B cell (primary cell): ENCODE measurements at regions of chr12 and their contacts with region 1.

Region 1: DNA sequence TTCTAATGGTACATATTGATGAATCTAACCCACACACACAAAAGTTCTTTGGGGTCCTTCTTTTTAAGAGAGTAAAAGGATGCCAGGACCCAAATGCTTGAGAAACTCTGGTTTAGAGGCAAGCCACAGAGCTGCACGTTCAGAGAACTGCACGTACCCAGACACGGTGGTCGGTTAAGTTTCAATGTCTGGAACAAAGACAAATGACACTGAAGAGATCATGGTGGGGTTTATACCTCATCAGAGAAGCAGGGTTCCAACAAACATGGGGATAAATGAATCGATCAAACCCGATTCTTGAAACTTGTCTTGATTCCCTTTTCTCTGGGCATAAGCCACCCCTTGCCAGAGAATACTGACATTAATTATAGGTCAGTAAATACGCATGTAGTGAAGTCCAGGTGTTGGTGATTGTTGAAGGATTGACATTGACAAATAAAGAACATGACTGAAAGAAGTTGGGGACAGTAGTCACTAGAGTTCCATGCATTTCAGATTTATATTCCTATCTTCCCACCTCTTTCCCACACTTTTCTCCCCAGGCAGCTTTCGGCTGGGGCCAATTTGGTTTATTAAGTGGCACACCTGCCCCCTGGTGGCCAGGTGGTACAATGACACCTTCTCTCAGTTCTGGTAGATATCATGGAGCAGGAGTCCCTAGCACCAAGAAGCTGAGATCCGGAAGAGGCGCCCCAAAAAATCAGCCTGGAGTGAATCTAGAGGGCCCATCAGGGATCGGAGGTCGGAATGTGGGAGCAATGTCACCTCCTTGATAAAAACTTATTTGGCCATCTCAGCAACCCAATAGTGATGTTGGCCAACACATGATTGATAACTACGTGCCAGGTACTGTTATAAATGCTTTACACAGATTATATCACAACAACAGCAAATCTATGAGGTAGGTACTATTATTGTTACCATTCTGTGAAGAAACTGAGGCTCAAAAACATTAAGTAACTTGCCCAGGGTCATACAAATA is 17.8 kb upstream of the HDAC7 start:
- DNase-seq: peak; percentile 84
- ATAC-seq: peak; percentile 50
- H3K4me3 ChIP-seq: no peak overlapping the region
- H3K4me3 Mint-ChIP-seq: peak overlapping the region; percentile 49
- H3K27ac ChIP-seq: no peak overlapping the region
- H3K27ac Mint-ChIP-seq: peak overlapping the region; percentile 77
- H3K4me1 ChIP-seq: peaks cover 46 to 53% of the 10 kb centered on the region in 2 donors
- H3K4me1 Mint-ChIP-seq: peaks cover 53% of the 10 kb centered on the region
- H3K27me3 ChIP-seq: no peaks in the 10 kb centered on the region
- H3K27me3 Mint-ChIP-seq: no peaks in the 10 kb centered on the region
- CTCF ChIP-seq: peak; percentile 95

Region 2: DNA sequence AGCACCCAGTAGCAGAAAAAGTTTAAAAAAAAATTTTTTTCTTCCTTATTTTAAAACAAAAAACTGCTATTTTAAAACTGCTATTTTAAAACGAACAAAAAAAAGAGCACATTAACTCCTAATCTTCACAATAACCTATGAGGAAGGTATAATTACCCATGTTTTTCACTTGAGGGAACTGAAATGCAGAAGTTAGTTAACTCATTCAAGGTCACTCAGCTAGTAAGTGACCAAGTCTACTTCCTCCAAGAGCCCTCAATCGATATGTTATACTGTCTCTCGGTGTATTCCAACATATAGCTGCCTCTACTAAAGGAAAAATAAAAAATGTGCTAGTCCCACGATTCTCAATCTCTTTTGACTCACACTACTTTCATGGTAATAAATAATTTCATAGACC is 139.4 kb before region 1 on chr12:
- CTCF ChIA-PET with region 1: interaction called, 15 read pairs
- POLR2A ChIA-PET with region 1: no interaction called
- intact Hi-C with region 1: no loop called
- DNase-seq: peak; percentile 54
- ATAC-seq: peak; percentile 68
- H3K4me3 ChIP-seq: peak overlapping the region in 1 of 5 experiments; percentile 11
- H3K4me3 Mint-ChIP-seq: peak overlapping the region; percentile 21
- H3K27ac ChIP-seq: peak overlapping the region in 1 of 2 donors; percentile 39
- H3K27ac Mint-ChIP-seq: peak overlapping the region; percentile 22
- H3K4me1 ChIP-seq: peaks cover 17 to 20% of the 10 kb centered on the region in 2 donors
- H3K4me1 Mint-ChIP-seq: peaks cover 46% of the 10 kb centered on the region
- H3K27me3 ChIP-seq: no peaks in the 10 kb centered on the region
- H3K27me3 Mint-ChIP-seq: no peaks in the 10 kb centered on the region
- CTCF ChIP-seq: no peak

Region 3: GRCh38 chr12:47725893-47726292 is 111.6 kb before region 1 on chr12:
- CTCF ChIA-PET with region 1: interaction called, 15 read pairs
- POLR2A ChIA-PET with region 1: no interaction called
- intact Hi-C with region 1: no loop called
- DNase-seq: no peak
- ATAC-seq: peak; percentile 82
- H3K4me3 ChIP-seq: no peak overlapping the region
- H3K4me3 Mint-ChIP-seq: peak overlapping the region; percentile 5
- H3K27ac ChIP-seq: no peak overlapping the region
- H3K27ac Mint-ChIP-seq: no peak overlapping the region
- H3K4me1 ChIP-seq: peaks cover 9 to 20% of the 10 kb centered on the region in 2 donors
- H3K4me1 Mint-ChIP-seq: peaks cover 24% of the 10 kb centered on the region
- H3K27me3 ChIP-seq: no peaks in the 10 kb centered on the region
- H3K27me3 Mint-ChIP-seq: no peaks in the 10 kb centered on the region
- CTCF ChIP-seq: no peak

Region 4: GRCh38 chr12:47767216-47767724 is 70.2 kb before region 1 on chr12:
- CTCF ChIA-PET with region 1: interaction called, 464 read pairs
- POLR2A ChIA-PET with region 1: interaction called, 6 read pairs
- intact Hi-C with region 1: no loop called
- DNase-seq: peak; percentile 78
- ATAC-seq: peak; percentile 74
- H3K4me3 ChIP-seq: no peak overlapping the region
- H3K4me3 Mint-ChIP-seq: no peak overlapping the region
- H3K27ac ChIP-seq: no peak overlapping the region
- H3K27ac Mint-ChIP-seq: no peak overlapping the region
- H3K4me1 ChIP-seq: peaks cover 5 to 15% of the 10 kb centered on the region in 2 donors
- H3K4me1 Mint-ChIP-seq: peaks cover 9% of the 10 kb centered on the region
- H3K27me3 ChIP-seq: no peaks in the 10 kb centered on the region
- H3K27me3 Mint-ChIP-seq: peaks cover 4% of the 10 kb centered on the region
- CTCF ChIP-seq: peak; percentile 80

Region 5: GRCh38 chr12:47797441-47797840 is 40.0 kb before region 1 on chr12:
- CTCF ChIA-PET with region 1: interaction called, 1,203 read pairs
- POLR2A ChIA-PET with region 1: interaction called, 14 read pairs
- intact Hi-C with region 1: loop called (anchors 1 kb)
- DNase-seq: peak; percentile 68
- ATAC-seq: peak; percentile 87
- H3K4me3 ChIP-seq: no peak overlapping the region
- H3K4me3 Mint-ChIP-seq: no peak overlapping the region
- H3K27ac ChIP-seq: no peak overlapping the region
- H3K27ac Mint-ChIP-seq: peak overlapping the region; percentile 84
- H3K4me1 ChIP-seq: peaks cover 12 to 26% of the 10 kb centered on the region in 2 donors
- H3K4me1 Mint-ChIP-seq: peaks cover 22% of the 10 kb centered on the region
- H3K27me3 ChIP-seq: no peaks in the 10 kb centered on the region
- H3K27me3 Mint-ChIP-seq: no peaks in the 10 kb centered on the region
- CTCF ChIP-seq: peak; percentile 38

Region 6: GRCh38 chr12:47819896-47820630 is 17.4 kb before region 1 on chr12 and contains the start of gene HDAC7:
- CTCF ChIA-PET with region 1: interaction called, 1,203 read pairs
- POLR2A ChIA-PET with region 1: interaction called, 264 read pairs
- intact Hi-C with region 1: loop called (anchors 1 kb)
- DNase-seq: peak; percentile 82
- ATAC-seq: peak; percentile 74
- H3K4me3 ChIP-seq: peak within 1 kb of the TSS; percentile 58 to 76 (median 73)
- H3K4me3 Mint-ChIP-seq: peak within 1 kb of the TSS; percentile 96
- H3K27ac ChIP-seq: peak within 1 kb of the TSS; percentile 67 to 96
- H3K27ac Mint-ChIP-seq: peak within 1 kb of the TSS; percentile 97
- H3K4me1 ChIP-seq: peaks cover 51 to 64% of the 10 kb centered on the region in 2 donors
- H3K4me1 Mint-ChIP-seq: peaks cover 67% of the 10 kb centered on the region
- H3K27me3 ChIP-seq: no peaks in the 10 kb centered on the region
- H3K27me3 Mint-ChIP-seq: no peaks in the 10 kb centered on the region
- CTCF ChIP-seq: no peak
- total RNA-seq, gene HDAC7: 175 and 178 TPM in 2 replicates

Region 7: DNA sequence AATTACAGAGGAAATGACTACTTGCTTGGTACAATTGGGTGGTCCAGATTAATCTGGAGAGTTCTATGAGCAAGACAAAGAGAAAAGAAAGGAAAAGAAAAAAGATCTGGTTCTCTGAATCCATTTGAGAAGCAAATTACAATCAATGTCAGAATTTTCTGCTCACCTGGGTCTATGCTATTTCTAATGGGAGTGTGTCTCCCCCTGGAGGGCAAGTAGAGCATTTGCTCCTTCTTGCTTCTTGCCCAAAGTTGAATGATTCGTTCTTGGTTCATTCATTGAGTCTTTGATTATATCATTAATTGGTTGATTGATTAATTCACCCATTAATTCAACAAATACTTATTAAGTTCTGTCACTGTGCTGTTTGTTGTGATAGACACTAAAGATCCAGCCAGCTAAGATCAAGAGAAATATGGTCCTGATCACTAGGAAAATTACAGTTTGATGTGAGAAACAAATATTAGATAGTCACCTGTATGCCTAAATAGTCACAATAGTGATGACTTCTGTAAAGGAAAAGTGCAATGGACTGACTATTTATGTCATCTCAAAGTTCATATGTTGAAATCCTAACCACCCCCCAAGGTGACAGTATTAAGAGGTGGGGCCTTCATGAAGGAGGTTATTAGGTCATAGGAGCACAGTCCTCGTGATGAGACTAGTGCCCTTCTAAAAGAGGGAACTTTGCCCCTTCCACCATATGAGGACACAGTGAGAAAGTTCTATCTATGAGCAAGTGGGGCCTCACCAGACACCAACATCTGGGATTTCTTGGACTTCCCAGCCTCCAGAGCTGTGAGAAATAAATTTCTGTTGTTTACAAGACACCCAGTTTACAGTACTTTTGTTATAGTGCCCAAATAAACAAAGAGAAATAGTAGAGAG is 327.9 kb after region 1 on chr12:
- CTCF ChIA-PET with region 1: interaction called, 6 read pairs
- POLR2A ChIA-PET with region 1: no interaction called
- intact Hi-C with region 1: loop called (anchors 10 kb)
- DNase-seq: peak; percentile 79
- ATAC-seq: peak; percentile 82
- H3K4me3 ChIP-seq: no peak overlapping the region
- H3K4me3 Mint-ChIP-seq: no peak overlapping the region
- H3K27ac ChIP-seq: no peak overlapping the region
- H3K27ac Mint-ChIP-seq: no peak overlapping the region
- H3K4me1 ChIP-seq: no peaks in the 10 kb centered on the region
- H3K4me1 Mint-ChIP-seq: no peaks in the 10 kb centered on the region
- H3K27me3 ChIP-seq: peaks cover 0 to 13% (median 1%) of the 10 kb centered on the region in 4 experiments
- H3K27me3 Mint-ChIP-seq: peaks cover 22% of the 10 kb centered on the region
- CTCF ChIP-seq: peak; percentile 96